MCF 10A (cell line): ENCODE measurements at regions of chr1 and their contacts with region 1.

Region 1: DNA sequence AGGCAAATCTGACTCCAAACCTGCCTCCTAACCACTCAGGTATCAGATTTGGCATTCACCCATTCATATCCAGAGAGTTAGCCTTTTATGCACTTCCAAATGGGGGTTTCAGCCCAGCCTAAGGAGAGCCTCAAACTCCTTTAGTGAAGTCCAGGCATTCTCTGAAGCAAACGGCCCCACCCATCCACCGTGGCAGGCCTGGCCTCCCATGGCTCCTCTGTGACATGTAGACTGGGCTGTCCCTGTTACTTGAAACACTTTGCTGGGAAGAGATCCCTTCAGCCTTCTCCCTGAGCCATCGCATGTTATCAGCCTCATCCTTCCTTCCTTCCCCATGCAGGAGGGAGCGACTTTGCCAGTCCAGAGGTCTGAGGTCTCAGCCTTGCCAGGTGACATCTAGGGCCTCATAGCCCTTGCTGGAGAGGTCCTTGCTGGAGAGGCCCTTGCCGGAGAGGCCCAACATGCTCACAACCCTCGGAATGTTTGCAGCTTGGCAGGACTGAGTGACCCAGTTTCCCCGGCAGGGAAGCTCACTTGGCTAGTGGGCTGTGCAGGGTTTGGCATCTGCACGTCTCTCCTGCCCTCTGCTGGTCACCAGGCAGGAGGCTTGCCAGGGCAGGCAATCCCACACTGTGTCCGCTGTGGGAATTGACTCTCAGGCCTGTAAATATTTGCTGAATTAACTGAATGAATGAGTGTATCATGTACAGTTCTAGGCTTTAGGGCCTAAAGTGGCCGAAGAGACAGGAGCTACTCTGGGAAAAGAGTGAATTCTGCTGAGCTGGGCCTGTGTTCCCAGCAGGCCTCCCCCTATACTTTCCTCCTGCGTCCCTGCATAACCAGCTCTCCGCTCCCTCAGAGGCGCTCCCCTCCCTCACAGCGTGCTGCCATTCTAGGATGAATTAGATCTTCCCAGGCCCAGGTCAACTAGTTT is 26.7 kb upstream of the RBM15 start:
- DNase-seq: peak; percentile 67
- H3K4me3 Mint-ChIP-seq: no peak overlapping the region
- H3K27ac Mint-ChIP-seq: no peak overlapping the region
- H3K4me1 Mint-ChIP-seq: peaks cover 6% of the 10 kb centered on the region
- H3K27me3 Mint-ChIP-seq: no peaks in the 10 kb centered on the region
- CTCF ChIP-seq: peak; percentile 91

Region 2: DNA sequence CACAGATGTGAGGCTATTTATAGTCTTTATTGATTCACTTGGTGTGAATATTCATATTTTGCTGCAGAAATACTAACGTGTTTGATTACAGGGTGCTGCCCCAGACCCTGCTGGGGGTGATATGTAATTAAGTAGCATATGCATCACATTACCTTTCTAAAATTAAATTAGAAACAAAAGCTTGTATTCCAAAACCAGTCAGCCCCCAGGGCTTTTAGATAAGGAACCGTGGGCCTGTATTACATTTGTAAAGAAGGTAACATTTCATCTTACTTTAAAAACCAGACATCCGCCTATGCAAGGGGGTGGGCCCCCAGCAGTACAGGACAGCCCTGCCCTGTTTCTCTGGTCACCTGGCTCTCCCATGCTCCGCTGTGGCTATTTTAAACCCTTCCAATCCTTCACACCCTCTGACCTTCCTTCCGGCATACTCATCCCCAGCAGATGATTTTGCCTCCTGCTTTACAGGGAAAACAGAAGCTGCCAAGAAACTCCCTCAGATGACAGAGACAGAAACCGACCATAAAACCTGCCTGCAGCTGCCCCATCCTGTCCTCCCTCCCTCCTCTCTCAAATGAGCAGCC is 124.3 kb before region 1 on chr1:
- CTCF ChIA-PET with region 1: interaction called, 15 read pairs
- POLR2A ChIA-PET with region 1: no interaction called
- intact Hi-C with region 1: no loop called
- DNase-seq: peak; percentile 45
- H3K4me3 Mint-ChIP-seq: no peak overlapping the region
- H3K27ac Mint-ChIP-seq: no peak overlapping the region
- H3K4me1 Mint-ChIP-seq: peaks cover 6% of the 10 kb centered on the region
- H3K27me3 Mint-ChIP-seq: peaks cover 34% of the 10 kb centered on the region
- CTCF ChIP-seq: no peak

Region 3: GRCh38 chr1:110209715-110210603 is 102.5 kb before region 1 on chr1 and contains the start of gene KCNC4:
- CTCF ChIA-PET with region 1: interaction called, 1,128 read pairs
- POLR2A ChIA-PET with region 1: interaction called, 33 read pairs
- intact Hi-C with region 1: loop called (anchors 1 kb)
- DNase-seq: peak; percentile 56
- H3K4me3 Mint-ChIP-seq: peak within 1 kb of the TSS; percentile 72
- H3K27ac Mint-ChIP-seq: no peak within 1 kb of the TSS
- H3K4me1 Mint-ChIP-seq: peaks cover 5% of the 10 kb centered on the region
- H3K27me3 Mint-ChIP-seq: no peaks in the 10 kb centered on the region
- CTCF ChIP-seq: no peak
- total RNA-seq, gene KCNC4: 1.1 and 1.3 TPM in 2 replicates

Region 4: GRCh38 chr1:110272045-110272444 is 40.4 kb before region 1 on chr1:
- CTCF ChIA-PET with region 1: interaction called, 4 read pairs
- POLR2A ChIA-PET with region 1: no interaction called
- intact Hi-C with region 1: loop called (anchors 5 kb)
- DNase-seq: no peak
- H3K4me3 Mint-ChIP-seq: no peak overlapping the region
- H3K27ac Mint-ChIP-seq: no peak overlapping the region
- H3K4me1 Mint-ChIP-seq: peaks cover 6% of the 10 kb centered on the region
- H3K27me3 Mint-ChIP-seq: peaks cover 24% of the 10 kb centered on the region
- CTCF ChIP-seq: no peak

Region 5: DNA sequence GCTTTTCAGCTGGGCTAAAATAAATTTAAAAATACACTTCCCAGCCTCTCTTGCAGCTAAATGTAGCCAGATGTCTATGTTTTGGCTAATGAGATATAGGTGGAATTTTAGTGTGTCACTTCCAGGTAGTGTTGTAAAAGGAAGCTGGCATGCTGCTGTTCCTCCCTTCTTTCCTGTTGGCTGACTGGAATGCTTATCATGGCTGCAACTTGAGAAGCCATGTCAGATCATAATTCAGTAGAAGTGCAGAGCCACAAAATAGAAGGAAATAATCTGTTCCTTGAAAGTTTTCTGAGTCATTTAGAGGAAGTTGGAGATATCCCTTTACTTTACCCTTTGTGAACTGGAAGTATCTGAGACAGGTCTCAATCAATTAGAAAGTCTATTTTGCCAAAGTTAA is 15.8 kb after region 1 on chr1:
- CTCF ChIA-PET with region 1: interaction called, 15 read pairs
- POLR2A ChIA-PET with region 1: no interaction called
- intact Hi-C with region 1: no loop called
- DNase-seq: no peak
- H3K4me3 Mint-ChIP-seq: no peak overlapping the region
- H3K27ac Mint-ChIP-seq: no peak overlapping the region
- H3K4me1 Mint-ChIP-seq: no peaks in the 10 kb centered on the region
- H3K27me3 Mint-ChIP-seq: no peaks in the 10 kb centered on the region
- CTCF ChIP-seq: no peak

Region 6: GRCh38 chr1:110412576-110412975 is 100.1 kb after region 1 on chr1:
- CTCF ChIA-PET with region 1: interaction called, 14 read pairs
- POLR2A ChIA-PET with region 1: no interaction called
- intact Hi-C with region 1: no loop called
- DNase-seq: peak; percentile 84
- H3K4me3 Mint-ChIP-seq: no peak overlapping the region
- H3K27ac Mint-ChIP-seq: peak overlapping the region; percentile 17
- H3K4me1 Mint-ChIP-seq: peaks cover 12% of the 10 kb centered on the region
- H3K27me3 Mint-ChIP-seq: no peaks in the 10 kb centered on the region
- CTCF ChIP-seq: peak; percentile 87